Caco-2 (cell line): ENCODE measurements at regions of chr7 and their contacts with region 1.

Region 1: DNA sequence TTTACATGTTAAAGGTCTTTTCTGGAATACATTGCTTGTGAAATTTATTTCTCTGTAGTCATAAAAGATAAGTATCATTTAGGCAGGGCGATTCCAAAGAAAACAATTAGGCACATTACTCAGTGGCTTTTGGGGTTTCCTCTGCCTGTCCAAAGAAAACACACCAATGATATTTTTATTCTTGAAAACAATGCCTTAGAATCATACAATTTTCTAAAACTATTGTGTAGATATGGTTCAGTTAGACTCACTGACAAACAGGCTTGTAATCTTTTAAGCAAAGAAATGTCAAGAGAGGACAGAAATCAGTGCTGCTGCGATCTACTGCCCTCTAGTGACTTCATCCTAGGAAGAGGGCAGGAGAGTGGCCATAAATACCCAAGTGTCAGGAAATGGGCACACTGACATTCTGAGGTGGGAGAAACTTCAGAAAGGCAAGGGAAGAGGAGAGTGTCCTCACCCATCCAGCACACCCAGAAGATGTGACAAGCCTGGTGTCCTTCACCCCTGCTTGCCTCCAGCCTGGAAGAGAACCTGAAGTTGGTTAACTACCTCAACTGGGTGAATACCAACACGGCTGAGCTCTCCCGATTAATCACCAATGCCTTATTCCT is 120.5 kb downstream of the GALNT11 start:
- DNase-seq: peak in 1 of 2 experiments; percentile 62
- H3K4me3 ChIP-seq: no peak overlapping the region
- H3K4me3 Mint-ChIP-seq: no peak overlapping the region
- H3K27ac Mint-ChIP-seq: no peak overlapping the region
- H3K4me1 ChIP-seq: no peaks in the 10 kb centered on the region
- H3K4me1 Mint-ChIP-seq: no peaks in the 10 kb centered on the region
- H3K27me3 ChIP-seq: no peaks in the 10 kb centered on the region
- H3K27me3 Mint-ChIP-seq: no peaks in the 10 kb centered on the region
- CTCF ChIP-seq: peak; percentile 64 to 65

Region 2: DNA sequence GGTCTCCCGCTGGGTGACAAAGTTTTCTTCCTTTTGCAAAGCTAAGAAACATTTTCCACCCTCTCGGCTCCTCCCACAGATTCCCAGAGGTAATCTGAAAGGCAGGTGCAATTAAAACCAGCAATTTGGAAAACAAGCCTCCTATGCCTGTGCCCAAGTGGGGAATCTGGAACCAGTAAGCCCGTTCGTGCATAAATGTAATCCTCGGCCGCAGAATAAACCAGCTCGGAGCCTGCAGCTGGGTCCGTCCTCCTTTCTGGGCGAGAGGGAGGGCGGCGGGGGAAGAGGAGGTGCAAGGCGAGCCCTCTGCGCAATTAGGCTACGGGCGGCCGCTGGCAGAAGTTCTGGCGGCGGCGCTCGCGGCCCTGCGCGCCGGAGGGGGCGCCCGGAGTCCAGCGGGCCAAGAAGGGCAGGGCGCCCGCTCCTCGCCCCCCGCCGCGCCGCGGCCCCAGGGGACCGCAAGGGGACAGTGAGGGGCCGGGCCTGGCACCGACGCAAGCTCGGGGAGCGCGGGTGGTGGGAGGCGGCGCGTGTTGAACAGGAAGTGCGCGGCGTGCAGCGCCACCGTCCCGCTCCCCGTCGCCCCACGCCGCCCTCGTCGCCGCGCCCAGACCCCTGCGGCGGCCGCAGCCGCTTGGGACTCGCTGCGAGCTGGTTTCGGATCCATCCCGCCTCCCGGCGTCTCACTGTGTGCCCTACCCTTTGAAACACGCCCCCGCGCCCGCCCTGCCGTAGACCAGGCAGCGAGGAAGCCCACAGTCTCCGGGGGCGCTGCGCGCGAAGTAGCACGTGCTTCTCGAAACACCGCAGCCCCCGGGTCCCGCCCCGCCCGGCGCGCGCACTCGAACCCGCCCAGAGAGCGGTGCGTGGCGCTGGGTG is 268.8 kb before region 1 on chr7 and contains the start of gene PRKAG2:
- CTCF ChIA-PET with region 1: no interaction called
- POLR2A ChIA-PET with region 1: no interaction called
- intact Hi-C with region 1: loop called (anchors 10 kb)
- DNase-seq: peak; percentile 62 to 63
- H3K4me3 ChIP-seq: peak within 1 kb of the TSS; percentile 83
- H3K4me3 Mint-ChIP-seq: peak within 1 kb of the TSS; percentile 94
- H3K27ac Mint-ChIP-seq: no peak within 1 kb of the TSS
- H3K4me1 ChIP-seq: 0 out of 2 replicates have a peak, but pooled peaks cover 7% of the 10 kb centered on the region
- H3K4me1 Mint-ChIP-seq: no peaks in the 10 kb centered on the region
- H3K27me3 ChIP-seq: peaks cover 1% of the 10 kb centered on the region; the same call in 1 of the 2 replicates
- H3K27me3 Mint-ChIP-seq: no peaks in the 10 kb centered on the region
- CTCF ChIP-seq: no peak
- total RNA-seq, gene PRKAG2: 14.7 and 15.9 TPM in 2 replicates

Region 3: GRCh38 chr7:151890355-151891004 is 255.5 kb before region 1 on chr7:
- CTCF ChIA-PET with region 1: no interaction called
- POLR2A ChIA-PET with region 1: no interaction called
- intact Hi-C with region 1: no loop called
- DNase-seq: peak in 1 of 2 experiments; percentile 4
- H3K4me3 ChIP-seq: no peak overlapping the region
- H3K4me3 Mint-ChIP-seq: no peak overlapping the region
- H3K27ac Mint-ChIP-seq: no peak overlapping the region
- H3K4me1 ChIP-seq: no peaks in the 10 kb centered on the region
- H3K4me1 Mint-ChIP-seq: peaks cover 6% of the 10 kb centered on the region
- H3K27me3 ChIP-seq: no peaks in the 10 kb centered on the region; the same call in 1 of the 2 replicates
- H3K27me3 Mint-ChIP-seq: peaks cover 21% of the 10 kb centered on the region
- CTCF ChIP-seq: no peak

Region 4: GRCh38 chr7:151984606-151985005 is 161.4 kb before region 1 on chr7:
- CTCF ChIA-PET with region 1: no interaction called
- POLR2A ChIA-PET with region 1: no interaction called
- intact Hi-C with region 1: loop called (anchors 1 kb)
- DNase-seq: peak in 1 of 2 experiments; percentile 19
- H3K4me3 ChIP-seq: no peak overlapping the region
- H3K4me3 Mint-ChIP-seq: no peak overlapping the region
- H3K27ac Mint-ChIP-seq: no peak overlapping the region
- H3K4me1 ChIP-seq: no peaks in the 10 kb centered on the region
- H3K4me1 Mint-ChIP-seq: no peaks in the 10 kb centered on the region
- H3K27me3 ChIP-seq: no peaks in the 10 kb centered on the region
- H3K27me3 Mint-ChIP-seq: no peaks in the 10 kb centered on the region
- CTCF ChIP-seq: peak; percentile 11 to 41

Region 5: DNA sequence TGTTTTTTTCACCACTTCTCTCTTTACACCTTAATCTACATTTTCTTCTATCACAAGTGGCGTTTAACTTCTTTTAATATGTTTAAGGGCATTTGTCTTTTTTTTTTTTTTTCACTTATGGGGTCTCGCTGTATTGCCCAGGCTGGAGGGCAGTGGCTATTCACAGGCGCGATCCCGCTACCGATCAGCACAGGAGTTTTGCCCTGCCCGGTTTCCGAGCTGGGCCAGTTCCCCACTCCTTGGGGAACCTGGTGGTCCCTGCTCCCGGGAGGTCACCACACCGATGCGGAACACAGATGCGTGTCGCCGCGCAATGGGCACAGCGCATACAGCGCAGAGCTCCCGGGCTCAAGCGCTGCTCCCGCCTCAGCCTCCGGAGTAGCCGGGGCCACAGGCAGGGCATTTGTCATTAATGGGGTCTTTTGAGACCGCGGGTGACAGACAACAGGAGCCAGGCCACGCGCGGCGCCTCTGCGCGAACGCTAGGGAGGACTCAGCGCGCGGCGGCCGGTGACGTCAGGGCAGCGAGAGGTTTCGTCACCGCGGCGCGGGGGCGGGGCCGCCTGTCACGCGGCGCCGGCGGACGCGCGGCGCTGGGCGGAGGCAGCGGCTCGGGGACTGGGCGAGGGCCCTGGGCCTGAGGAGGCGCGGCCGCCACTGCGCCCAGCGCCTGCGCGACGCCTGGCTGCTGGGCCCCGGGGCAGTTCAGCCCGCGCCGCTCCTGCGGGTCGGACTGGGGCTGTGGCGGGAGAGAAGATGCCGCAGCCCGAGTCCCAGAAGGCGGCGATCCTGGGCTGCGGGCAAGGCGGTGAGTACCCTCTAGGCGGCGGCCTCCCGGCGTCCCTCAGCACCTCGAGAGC is 120.7 kb before region 1 on chr7 and contains the start of gene GALNT11:
- CTCF ChIA-PET with region 1: no interaction called
- POLR2A ChIA-PET with region 1: no interaction called
- intact Hi-C with region 1: loop called (anchors 5 kb)
- DNase-seq: peak; percentile 83 to 93
- H3K4me3 ChIP-seq: peak within 1 kb of the TSS; percentile 54
- H3K4me3 Mint-ChIP-seq: peak within 1 kb of the TSS; percentile 80
- H3K27ac Mint-ChIP-seq: peak within 1 kb of the TSS; percentile 80
- H3K4me1 ChIP-seq: no peaks in the 10 kb centered on the region; the same call in 1 of the 2 replicates
- H3K4me1 Mint-ChIP-seq: peaks cover 21% of the 10 kb centered on the region
- H3K27me3 ChIP-seq: no peaks in the 10 kb centered on the region
- H3K27me3 Mint-ChIP-seq: no peaks in the 10 kb centered on the region
- CTCF ChIP-seq: peak; percentile 17 to 47
- total RNA-seq, gene GALNT11: 31.4 and 34.9 TPM in 2 replicates

Region 6: GRCh38 chr7:152424348-152425108 is 278.6 kb after region 1 on chr7:
- CTCF ChIA-PET with region 1: no interaction called
- POLR2A ChIA-PET with region 1: no interaction called
- intact Hi-C with region 1: no loop called
- DNase-seq: no peak
- H3K4me3 ChIP-seq: no peak overlapping the region
- H3K4me3 Mint-ChIP-seq: no peak overlapping the region
- H3K27ac Mint-ChIP-seq: no peak overlapping the region
- H3K4me1 ChIP-seq: peaks cover 15% of the 10 kb centered on the region
- H3K4me1 Mint-ChIP-seq: peaks cover 24% of the 10 kb centered on the region
- H3K27me3 ChIP-seq: no peaks in the 10 kb centered on the region
- H3K27me3 Mint-ChIP-seq: no peaks in the 10 kb centered on the region
- CTCF ChIP-seq: no peak